Naive thymus-derived CD4-positive, alpha-beta T cell (primary cell): ENCODE measurements at regions of chr17 and their contacts with region 1.

Region 1: GRCh38 chr17:63697341-63698286 is 2.3 kb downstream of the LIMD2 start:
- DNase-seq: peak; percentile 74 to 91 (median 86)
- ATAC-seq: peak; percentile 57
- H3K4me3 ChIP-seq: peak overlapping the region; percentile 81
- H3K4me3 Mint-ChIP-seq: peak overlapping the region; percentile 83 to 100 (median 98)
- H3K27ac ChIP-seq: peak overlapping the region; percentile 93
- H3K27ac Mint-ChIP-seq: peak overlapping the region; percentile 89 to 100 (median 99)
- H3K4me1 ChIP-seq: peaks cover 43 to 46% of the 10 kb centered on the region in 2 donors
- H3K4me1 Mint-ChIP-seq: peaks cover 45 to 61% (median 56%) of the 10 kb centered on the region in 7 donors
- H3K27me3 ChIP-seq: no peaks in the 10 kb centered on the region
- H3K27me3 Mint-ChIP-seq: no peaks in the 10 kb centered on the region

Region 2: DNA sequence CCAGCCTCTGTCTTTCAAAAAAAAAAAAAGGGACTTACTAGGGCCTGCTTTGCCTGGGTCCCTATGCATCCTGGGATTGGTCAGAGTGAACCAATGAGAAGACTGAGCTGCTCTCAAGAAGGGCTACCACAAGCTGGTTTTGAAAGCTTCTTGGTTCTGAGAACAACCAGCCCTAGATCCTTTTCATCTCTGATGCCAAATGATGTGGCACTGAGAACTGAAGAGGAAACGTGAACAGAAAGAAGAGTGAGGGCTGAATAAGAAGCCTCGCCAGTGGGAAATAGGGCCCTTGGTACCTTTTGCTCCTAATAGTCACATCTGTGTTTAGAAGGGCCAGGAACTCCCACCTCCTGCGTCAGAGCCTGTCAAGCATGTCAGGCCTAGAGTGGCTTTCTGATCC is 86.3 kb before region 1 on chr17:
- CTCF ChIA-PET with region 1: interaction called, 3 read pairs
- POLR2A ChIA-PET with region 1: interaction called, 13 read pairs
- intact Hi-C with region 1: loop called in 1 of 2 experiments (anchors 5 kb)
- DNase-seq: peak in 5 of 9 donors; percentile 3 to 57 (median 25)
- ATAC-seq: peak; percentile 47
- H3K4me3 ChIP-seq: no peak overlapping the region
- H3K4me3 Mint-ChIP-seq: peak overlapping the region in 9 of 10 donors; percentile 10 to 74 (median 58)
- H3K27ac ChIP-seq: peak overlapping the region; percentile 52
- H3K27ac Mint-ChIP-seq: peak overlapping the region; percentile 85 to 98 (median 93)
- H3K4me1 ChIP-seq: peaks cover 25 to 28% of the 10 kb centered on the region in 2 donors
- H3K4me1 Mint-ChIP-seq: peaks cover 22 to 30% (median 29%) of the 10 kb centered on the region in 7 donors
- H3K27me3 ChIP-seq: no peaks in the 10 kb centered on the region
- H3K27me3 Mint-ChIP-seq: no peaks in the 10 kb centered on the region

Region 3: GRCh38 chr17:63653050-63653449 is 44.6 kb before region 1 on chr17:
- CTCF ChIA-PET with region 1: no interaction called
- POLR2A ChIA-PET with region 1: no interaction called
- intact Hi-C with region 1: no loop called
- DNase-seq: no peak
- ATAC-seq: no peak
- H3K4me3 ChIP-seq: no peak overlapping the region
- H3K4me3 Mint-ChIP-seq: no peak overlapping the region
- H3K27ac ChIP-seq: no peak overlapping the region
- H3K27ac Mint-ChIP-seq: peak overlapping the region in 1 of 9 donors; percentile 16
- H3K4me1 ChIP-seq: peaks cover 0 to 4% of the 10 kb centered on the region in 2 donors
- H3K4me1 Mint-ChIP-seq: peaks cover 6 to 17% (median 14%) of the 10 kb centered on the region in 7 donors
- H3K27me3 ChIP-seq: no peaks in the 10 kb centered on the region
- H3K27me3 Mint-ChIP-seq: no peaks in the 10 kb centered on the region

Region 4: DNA sequence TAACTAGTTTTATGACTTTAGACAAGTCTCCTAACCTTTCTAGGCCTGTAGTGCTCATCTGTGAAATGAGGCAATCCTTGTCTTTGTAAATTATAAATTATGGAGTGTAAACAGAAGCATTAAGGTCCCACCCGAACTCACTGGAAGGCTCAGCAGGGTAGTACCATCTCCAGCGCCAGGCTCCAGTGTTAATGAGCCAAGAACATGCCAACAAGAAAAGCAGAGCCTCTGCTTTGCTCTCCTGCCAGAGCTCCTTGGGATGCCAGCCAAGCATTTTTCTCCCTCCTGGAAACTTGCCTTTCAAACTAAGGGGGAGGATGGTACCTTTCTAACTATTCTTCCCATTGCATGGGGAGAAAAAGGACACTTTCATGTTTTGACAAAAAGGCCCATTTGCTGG is 12.6 kb before region 1 on chr17:
- CTCF ChIA-PET with region 1: interaction called, 5 read pairs
- POLR2A ChIA-PET with region 1: interaction called, 60 read pairs
- intact Hi-C with region 1: no loop called
- DNase-seq: no peak
- ATAC-seq: no peak
- H3K4me3 ChIP-seq: no peak overlapping the region
- H3K4me3 Mint-ChIP-seq: no peak overlapping the region
- H3K27ac ChIP-seq: no peak overlapping the region
- H3K27ac Mint-ChIP-seq: peak overlapping the region in 2 of 9 donors; percentile 3 to 19
- H3K4me1 ChIP-seq: no peaks in the 10 kb centered on the region
- H3K4me1 Mint-ChIP-seq: peaks cover 0 to 9% (median 3%) of the 10 kb centered on the region in 7 donors
- H3K27me3 ChIP-seq: no peaks in the 10 kb centered on the region
- H3K27me3 Mint-ChIP-seq: no peaks in the 10 kb centered on the region

Region 5: DNA sequence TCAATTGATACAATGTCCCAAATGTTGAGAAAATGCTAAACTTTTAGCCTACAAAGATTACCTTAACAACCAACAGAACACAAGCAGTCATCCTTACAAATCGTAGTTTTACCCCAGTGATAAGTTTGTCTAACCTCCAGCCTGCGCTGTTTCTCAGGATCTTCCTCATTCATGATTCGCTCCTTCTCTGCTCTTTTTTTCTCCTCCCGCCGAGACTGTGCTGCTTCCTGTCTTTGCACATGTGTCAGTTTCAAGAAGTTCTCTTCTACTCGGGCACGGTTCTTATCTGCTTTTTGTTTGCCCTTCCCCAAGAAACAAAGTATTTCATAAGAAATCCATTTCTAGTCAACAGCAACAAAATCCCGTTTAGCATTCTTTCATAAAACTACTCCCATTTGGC is 54.2 kb after region 1 on chr17:
- CTCF ChIA-PET with region 1: no interaction called
- POLR2A ChIA-PET with region 1: interaction called, 14 read pairs
- intact Hi-C with region 1: no loop called
- DNase-seq: peak in 7 of 9 donors; percentile 26 to 52 (median 43)
- ATAC-seq: peak; percentile 83
- H3K4me3 ChIP-seq: no peak overlapping the region
- H3K4me3 Mint-ChIP-seq: peak overlapping the region; percentile 9 to 77 (median 62)
- H3K27ac ChIP-seq: peak overlapping the region; percentile 67
- H3K27ac Mint-ChIP-seq: peak overlapping the region; percentile 16 to 83 (median 76)
- H3K4me1 ChIP-seq: peaks cover 0 to 5% of the 10 kb centered on the region in 2 donors
- H3K4me1 Mint-ChIP-seq: peaks cover 8 to 21% (median 18%) of the 10 kb centered on the region in 7 donors
- H3K27me3 ChIP-seq: no peaks in the 10 kb centered on the region
- H3K27me3 Mint-ChIP-seq: no peaks in the 10 kb centered on the region

Region 6: DNA sequence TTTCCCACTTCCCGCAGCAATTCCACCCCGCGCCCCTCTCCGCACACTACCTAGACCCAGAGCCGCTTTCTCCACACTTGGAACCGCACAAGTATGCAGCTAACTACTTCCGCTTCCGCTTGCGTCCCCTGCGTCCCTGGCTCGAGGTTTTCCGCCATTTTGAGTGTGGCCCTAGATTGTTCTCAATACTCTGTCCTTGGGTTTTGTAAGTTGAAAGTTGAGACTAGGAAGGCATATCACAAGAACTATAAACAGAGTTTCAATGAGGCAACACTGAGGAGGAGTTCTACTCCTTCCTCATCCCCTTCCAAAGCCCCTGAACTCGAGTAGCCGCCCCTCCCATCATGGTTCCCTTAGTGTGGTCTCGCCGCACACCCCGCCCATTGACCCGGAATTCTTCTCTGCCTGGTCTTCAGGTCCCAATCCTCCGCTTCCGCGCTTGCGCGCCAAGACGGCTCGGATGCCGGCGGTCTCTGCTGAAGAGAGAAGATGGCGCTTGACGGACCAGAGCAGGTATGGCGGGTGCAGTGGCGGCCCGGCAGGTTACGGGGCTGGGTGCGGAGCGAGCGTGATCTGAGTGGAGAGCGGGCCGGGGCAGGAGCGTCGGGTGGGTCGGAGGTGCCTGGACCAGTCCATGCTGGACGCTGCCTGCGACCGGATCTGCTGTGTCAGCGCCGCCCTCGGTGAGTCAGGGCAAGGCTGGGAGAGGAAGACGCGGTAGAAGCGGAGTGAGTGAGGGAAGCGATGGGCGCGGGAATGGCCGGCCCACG is 129.6 kb after region 1 on chr17 and contains the starts of genes FTSJ3 and PSMC5:
- CTCF ChIA-PET with region 1: interaction called, 4 read pairs
- POLR2A ChIA-PET with region 1: interaction called, 13 read pairs
- intact Hi-C with region 1: loop called (anchors 1 kb)
- DNase-seq: peak; percentile 89 to 98 (median 96)
- ATAC-seq: peak; percentile 97
- H3K4me3 ChIP-seq: peak within 1 kb of the TSS; percentile 89
- H3K4me3 Mint-ChIP-seq: peak within 1 kb of the TSS; percentile 93 to 100 (median 98)
- H3K27ac ChIP-seq: peak within 1 kb of the TSS; percentile 87
- H3K27ac Mint-ChIP-seq: peak within 1 kb of the TSS; percentile 98 to 100 (median 99)
- H3K4me1 ChIP-seq: peaks cover 27 to 46% of the 10 kb centered on the region in 2 donors
- H3K4me1 Mint-ChIP-seq: peaks cover 43 to 82% (median 77%) of the 10 kb centered on the region in 7 donors
- H3K27me3 ChIP-seq: no peaks in the 10 kb centered on the region
- H3K27me3 Mint-ChIP-seq: no peaks in the 10 kb centered on the region
- total RNA-seq, gene FTSJ3: 38.1 to 66.2 (median 55.8) TPM
- total RNA-seq, gene PSMC5: 68.4 to 153 (median 105) TPM

Region 7: GRCh38 chr17:64020056-64020766 is 322.6 kb after region 1 on chr17 and contains the start of gene ICAM2:
- CTCF ChIA-PET with region 1: no interaction called
- POLR2A ChIA-PET with region 1: interaction called, 7 read pairs
- intact Hi-C with region 1: loop called in 1 of 2 experiments (anchors 1 kb)
- DNase-seq: peak; percentile 73 to 97 (median 96)
- ATAC-seq: peak; percentile 90
- H3K4me3 ChIP-seq: peak within 1 kb of the TSS; percentile 94
- H3K4me3 Mint-ChIP-seq: peak within 1 kb of the TSS; percentile 91 to 100 (median 98)
- H3K27ac ChIP-seq: peak within 1 kb of the TSS; percentile 96
- H3K27ac Mint-ChIP-seq: peak within 1 kb of the TSS; percentile 91 to 100 (median 100)
- H3K4me1 ChIP-seq: peaks cover 57 to 68% of the 10 kb centered on the region in 2 donors
- H3K4me1 Mint-ChIP-seq: peaks cover 45 to 79% (median 71%) of the 10 kb centered on the region in 7 donors
- H3K27me3 ChIP-seq: no peaks in the 10 kb centered on the region
- H3K27me3 Mint-ChIP-seq: peaks cover 0 to 2% (median 0%) of the 10 kb centered on the region in 5 donors
- total RNA-seq, gene ICAM2: 60.9 to 132 (median 92.3) TPM